Calu3 (cell line): ENCODE measurements at regions of chr3 and their contacts with region 1.

Region 1: GRCh38 chr3:174408310-174408709 is 450.8 kb upstream of the NAALADL2 start:
- DNase-seq: no peak
- H3K4me3 Mint-ChIP-seq: no peak overlapping the region
- H3K27ac Mint-ChIP-seq: no peak overlapping the region
- H3K4me1 Mint-ChIP-seq: peaks cover 35% of the 10 kb centered on the region
- H3K27me3 Mint-ChIP-seq: no peaks in the 10 kb centered on the region
- CTCF ChIP-seq: no peak

Region 2: GRCh38 chr3:174202561-174202960 is 205.7 kb before region 1 on chr3:
- CTCF ChIA-PET with region 1: no interaction called
- intact Hi-C with region 1: no loop called
- DNase-seq: no peak
- H3K4me3 Mint-ChIP-seq: no peak overlapping the region
- H3K27ac Mint-ChIP-seq: no peak overlapping the region
- H3K4me1 Mint-ChIP-seq: no peaks in the 10 kb centered on the region
- H3K27me3 Mint-ChIP-seq: no peaks in the 10 kb centered on the region
- CTCF ChIP-seq: no peak

Region 3: DNA sequence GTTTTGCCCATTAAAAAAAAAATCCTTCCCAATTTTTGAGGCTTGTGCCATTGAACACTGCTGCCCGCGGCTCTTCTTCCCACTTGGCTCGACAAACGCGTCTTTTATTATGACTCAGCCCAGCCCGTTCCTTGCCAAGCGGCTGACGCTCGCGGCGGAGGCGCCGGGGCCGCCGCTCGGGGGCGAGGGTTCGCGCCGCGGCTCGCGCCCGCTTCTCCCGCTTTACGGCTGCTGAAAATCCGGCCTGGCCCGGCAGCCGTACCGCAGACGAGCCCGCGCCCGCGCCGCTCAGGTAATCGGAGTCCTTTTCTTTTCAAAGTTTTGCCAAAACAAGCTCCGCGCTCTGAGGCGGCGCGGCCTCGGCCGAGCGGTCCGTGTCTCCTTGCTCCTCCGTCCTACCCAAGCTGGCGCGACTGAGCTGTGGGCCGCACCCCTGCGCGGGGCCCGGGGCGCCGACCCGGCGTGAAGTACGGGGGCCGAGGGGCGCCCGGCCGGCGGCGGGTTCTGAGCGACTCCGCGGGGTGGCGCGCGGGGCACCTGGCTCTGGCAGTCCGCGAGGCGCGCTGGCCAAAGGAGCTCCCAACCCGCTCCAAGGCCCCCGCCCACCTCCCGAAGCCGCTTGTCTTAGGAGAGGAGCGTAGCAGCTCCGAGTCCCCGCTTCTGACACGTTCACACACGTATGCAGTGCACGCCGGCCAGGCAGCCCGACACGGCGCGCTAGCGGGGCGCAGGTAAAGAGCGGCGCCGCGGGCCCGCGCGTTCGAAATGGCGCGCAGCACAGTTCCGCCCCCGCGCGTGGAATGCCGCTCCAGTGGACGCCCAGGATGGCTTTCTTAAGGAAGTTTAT is 32.7 kb after region 1 on chr3:
- CTCF ChIA-PET with region 1: interaction called, 4 read pairs
- intact Hi-C with region 1: loop called (anchors 2 kb)
- DNase-seq: peak; percentile 94
- H3K4me3 Mint-ChIP-seq: peak overlapping the region; percentile 80
- H3K27ac Mint-ChIP-seq: peak overlapping the region; percentile 62
- H3K4me1 Mint-ChIP-seq: peaks cover 20% of the 10 kb centered on the region
- H3K27me3 Mint-ChIP-seq: no peaks in the 10 kb centered on the region
- CTCF ChIP-seq: peak; percentile 18

Region 4: GRCh38 chr3:174466471-174467054 is 58.3 kb after region 1 on chr3:
- CTCF ChIA-PET with region 1: no interaction called
- intact Hi-C with region 1: loop called (anchors 10 kb)
- DNase-seq: no peak
- H3K4me3 Mint-ChIP-seq: no peak overlapping the region
- H3K27ac Mint-ChIP-seq: no peak overlapping the region
- H3K4me1 Mint-ChIP-seq: no peaks in the 10 kb centered on the region
- H3K27me3 Mint-ChIP-seq: no peaks in the 10 kb centered on the region
- CTCF ChIP-seq: no peak

Region 5: GRCh38 chr3:174775587-174775986 is 367.3 kb after region 1 on chr3:
- CTCF ChIA-PET with region 1: no interaction called
- intact Hi-C with region 1: loop called (anchors 10 kb)
- DNase-seq: peak; percentile 26
- H3K4me3 Mint-ChIP-seq: no peak overlapping the region
- H3K27ac Mint-ChIP-seq: no peak overlapping the region
- H3K4me1 Mint-ChIP-seq: peaks cover 21% of the 10 kb centered on the region
- H3K27me3 Mint-ChIP-seq: no peaks in the 10 kb centered on the region
- CTCF ChIP-seq: no peak